Calu3 (cell line): ENCODE measurements at regions of chr15 and their contacts with region 1.

Region 1: GRCh38 chr15:59299929-59300617 is 72.6 kb downstream of the MYO1E start:
- DNase-seq: peak; percentile 83
- H3K4me3 Mint-ChIP-seq: peak overlapping the region; percentile 45
- H3K27ac Mint-ChIP-seq: peak overlapping the region; percentile 92
- H3K4me1 Mint-ChIP-seq: peaks cover 85% of the 10 kb centered on the region
- H3K27me3 Mint-ChIP-seq: no peaks in the 10 kb centered on the region
- CTCF ChIP-seq: no peak

Region 2: DNA sequence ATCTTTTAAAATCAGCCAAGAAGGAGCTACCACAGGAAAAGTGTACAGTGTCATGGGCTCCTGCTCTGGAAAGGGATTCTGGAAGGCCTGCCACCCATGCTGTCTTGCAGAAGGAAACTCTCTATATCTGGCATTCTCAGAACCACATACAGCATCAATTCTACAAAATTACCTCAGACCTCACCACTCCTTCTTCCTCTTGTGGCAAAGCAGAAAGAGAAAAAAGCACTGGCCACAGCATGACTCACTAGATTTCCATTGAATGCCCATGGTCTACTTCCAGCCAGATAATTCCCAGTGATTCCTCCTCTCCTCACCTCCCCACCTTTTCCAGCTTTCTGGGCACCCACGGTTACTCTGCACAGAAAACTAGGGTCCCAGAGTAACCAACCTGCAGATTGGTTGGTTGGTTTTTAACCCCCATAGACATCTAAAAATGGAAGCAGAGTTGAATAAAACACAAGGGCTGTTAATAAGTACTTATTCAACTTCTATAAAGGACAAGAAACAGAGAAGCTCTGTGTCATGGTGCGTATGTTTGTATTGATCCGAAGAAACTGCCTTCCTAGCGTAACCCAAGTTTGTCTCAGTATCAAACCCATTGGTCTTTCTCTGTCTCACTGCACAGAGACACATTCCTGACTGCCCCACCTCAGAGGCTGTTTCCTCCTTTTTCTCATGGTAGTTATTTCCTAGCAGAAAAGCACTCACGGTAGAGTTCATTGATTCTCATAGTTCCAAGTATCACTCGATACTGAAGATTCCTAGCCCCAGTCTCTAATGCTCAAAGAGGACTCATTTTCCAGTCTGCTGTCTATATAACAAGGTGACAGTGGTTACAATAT is 25.7 kb before region 1 on chr15:
- CTCF ChIA-PET with region 1: interaction called, 13 read pairs
- intact Hi-C with region 1: loop called (anchors 5 kb)
- DNase-seq: peak; percentile 77
- H3K4me3 Mint-ChIP-seq: peak overlapping the region; percentile 60
- H3K27ac Mint-ChIP-seq: peak overlapping the region; percentile 100
- H3K4me1 Mint-ChIP-seq: peaks cover 86% of the 10 kb centered on the region
- H3K27me3 Mint-ChIP-seq: no peaks in the 10 kb centered on the region
- CTCF ChIP-seq: no peak

Region 3: DNA sequence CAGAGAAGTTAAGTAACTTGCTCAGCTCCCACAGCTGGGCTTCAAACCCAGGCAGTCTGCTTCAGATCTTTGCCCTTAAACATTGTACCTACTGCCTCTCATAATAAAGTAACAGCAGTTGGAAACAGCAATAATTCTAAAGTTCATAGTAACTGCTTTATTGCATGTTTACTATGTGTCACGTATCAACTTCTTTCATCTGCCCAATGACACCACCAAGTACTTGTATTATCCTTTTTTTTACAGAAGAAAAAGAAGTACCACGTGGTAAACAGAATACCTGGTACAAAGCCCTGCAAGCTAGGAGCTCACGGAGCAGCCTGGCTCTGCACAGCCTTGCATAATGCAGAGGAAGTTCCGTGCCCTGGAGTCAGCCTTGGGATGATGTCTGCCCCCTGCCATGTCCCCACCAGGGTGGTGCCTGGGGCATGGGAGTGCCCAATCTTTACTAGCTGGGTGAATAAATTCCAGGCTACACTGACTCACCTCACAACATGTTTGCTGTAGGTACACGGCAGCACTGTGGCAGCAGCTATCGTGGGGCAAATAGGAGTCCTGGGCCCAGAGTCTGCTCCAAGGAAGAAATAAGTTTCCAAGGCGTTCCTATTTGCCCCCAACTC is 16.2 kb before region 1 on chr15:
- CTCF ChIA-PET with region 1: interaction called, 12 read pairs
- intact Hi-C with region 1: no loop called
- DNase-seq: peak; percentile 97
- H3K4me3 Mint-ChIP-seq: peak overlapping the region; percentile 60
- H3K27ac Mint-ChIP-seq: peak overlapping the region; percentile 93
- H3K4me1 Mint-ChIP-seq: peaks cover 93% of the 10 kb centered on the region
- H3K27me3 Mint-ChIP-seq: no peaks in the 10 kb centered on the region
- CTCF ChIP-seq: no peak